ENCODE measurements at regions of chr1 and their contacts with region 1.

Region 1: GRCh38 chr1:63522891-63523728 is at the starts of genes EFCAB7 and ITGB3BP:
- DNase-seq: peak; percentile 92
- ATAC-seq: peak; percentile 86
- H3K4me3 ChIP-seq: peak within 1 kb of the TSS; percentile 76 to 97 (median 88)
- H3K4me3 Mint-ChIP-seq: peak within 1 kb of the TSS; percentile 92
- H3K27ac ChIP-seq: peak within 1 kb of the TSS; percentile 88 to 91
- H3K27ac Mint-ChIP-seq: peak within 1 kb of the TSS; percentile 96
- H3K4me1 ChIP-seq: peaks cover 16 to 17% of the 10 kb centered on the region in 2 donors
- H3K4me1 Mint-ChIP-seq: peaks cover 26% of the 10 kb centered on the region
- H3K27me3 ChIP-seq: no peaks in the 10 kb centered on the region
- H3K27me3 Mint-ChIP-seq: no peaks in the 10 kb centered on the region
- CTCF ChIP-seq: no peak
- total RNA-seq, gene EFCAB7: 11.2 and 14.7 TPM in 2 replicates
- total RNA-seq, gene ITGB3BP: 30.3 and 37.4 TPM in 2 replicates

Region 2: GRCh38 chr1:62800825-62801306 is 722.2 kb before region 1 on chr1:
- CTCF ChIA-PET with region 1: no interaction called
- POLR2A ChIA-PET with region 1: no interaction called
- intact Hi-C with region 1: loop called (anchors 5 kb)
- DNase-seq: peak; percentile 90
- ATAC-seq: peak; percentile 99
- H3K4me3 ChIP-seq: peak overlapping the region in 3 of 5 experiments; percentile 11 to 53 (median 19)
- H3K4me3 Mint-ChIP-seq: peak overlapping the region; percentile 84
- H3K27ac ChIP-seq: peak overlapping the region; percentile 70 to 83
- H3K27ac Mint-ChIP-seq: peak overlapping the region; percentile 96
- H3K4me1 ChIP-seq: peaks cover 36 to 52% of the 10 kb centered on the region in 2 donors
- H3K4me1 Mint-ChIP-seq: peaks cover 38% of the 10 kb centered on the region
- H3K27me3 ChIP-seq: no peaks in the 10 kb centered on the region
- H3K27me3 Mint-ChIP-seq: no peaks in the 10 kb centered on the region
- CTCF ChIP-seq: no peak

Region 3: GRCh38 chr1:63316984-63317816 is 205.9 kb before region 1 on chr1:
- CTCF ChIA-PET with region 1: no interaction called
- POLR2A ChIA-PET with region 1: no interaction called
- intact Hi-C with region 1: loop called (anchors 5 kb)
- DNase-seq: peak; percentile 70
- ATAC-seq: peak; percentile 74
- H3K4me3 ChIP-seq: peak overlapping the region; percentile 3 to 59 (median 42)
- H3K4me3 Mint-ChIP-seq: peak overlapping the region; percentile 66
- H3K27ac ChIP-seq: no peak overlapping the region
- H3K27ac Mint-ChIP-seq: no peak overlapping the region
- H3K4me1 ChIP-seq: peaks cover 43 to 52% of the 10 kb centered on the region in 2 donors
- H3K4me1 Mint-ChIP-seq: peaks cover 28% of the 10 kb centered on the region
- H3K27me3 ChIP-seq: peaks cover 0 to 74% (median 60%) of the 10 kb centered on the region in 4 experiments
- H3K27me3 Mint-ChIP-seq: peaks cover 66% of the 10 kb centered on the region
- CTCF ChIP-seq: peak; percentile 54

Region 4: GRCh38 chr1:63367215-63368103 is 155.7 kb before region 1 on chr1 and contains the start of gene ALG6:
- CTCF ChIA-PET with region 1: no interaction called
- POLR2A ChIA-PET with region 1: no interaction called
- intact Hi-C with region 1: loop called (anchors 1 kb)
- DNase-seq: peak; percentile 94
- ATAC-seq: peak; percentile 95
- H3K4me3 ChIP-seq: peak within 1 kb of the TSS; percentile 66 to 97 (median 83)
- H3K4me3 Mint-ChIP-seq: peak within 1 kb of the TSS; percentile 99
- H3K27ac ChIP-seq: peak within 1 kb of the TSS; percentile 70 to 82
- H3K27ac Mint-ChIP-seq: peak within 1 kb of the TSS; percentile 92
- H3K4me1 ChIP-seq: peaks cover 9 to 15% of the 10 kb centered on the region in 2 donors
- H3K4me1 Mint-ChIP-seq: peaks cover 19% of the 10 kb centered on the region
- H3K27me3 ChIP-seq: no peaks in the 10 kb centered on the region
- H3K27me3 Mint-ChIP-seq: peaks cover 6% of the 10 kb centered on the region
- CTCF ChIP-seq: no peak
- total RNA-seq, gene ALG6: 31.4 and 35.0 TPM in 2 replicates

Region 5: DNA sequence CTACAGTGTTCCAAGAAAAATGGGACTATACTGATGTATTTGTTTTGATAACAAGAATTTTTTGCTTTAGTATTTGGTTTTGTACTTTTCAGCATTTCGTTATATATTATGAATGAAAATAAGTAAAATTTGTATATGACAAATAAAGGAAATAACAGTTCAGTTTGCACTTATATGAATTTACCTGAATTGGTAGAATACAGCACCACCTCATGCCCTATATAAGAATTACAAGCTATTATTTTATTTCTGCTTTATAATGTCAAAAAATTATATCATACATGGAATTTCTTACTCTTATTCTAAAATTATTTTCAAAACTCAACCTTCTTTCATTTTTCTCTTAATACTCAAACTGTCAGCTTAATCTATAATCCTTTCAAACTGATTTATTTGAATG is 14.8 kb after region 1 on chr1:
- CTCF ChIA-PET with region 1: interaction called, 3 read pairs
- POLR2A ChIA-PET with region 1: no interaction called
- intact Hi-C with region 1: loop called (anchors 2 kb)
- DNase-seq: peak; percentile 17
- ATAC-seq: no peak
- H3K4me3 ChIP-seq: no peak overlapping the region
- H3K4me3 Mint-ChIP-seq: no peak overlapping the region
- H3K27ac ChIP-seq: no peak overlapping the region
- H3K27ac Mint-ChIP-seq: no peak overlapping the region
- H3K4me1 ChIP-seq: no peaks in the 10 kb centered on the region
- H3K4me1 Mint-ChIP-seq: no peaks in the 10 kb centered on the region
- H3K27me3 ChIP-seq: no peaks in the 10 kb centered on the region
- H3K27me3 Mint-ChIP-seq: no peaks in the 10 kb centered on the region
- CTCF ChIP-seq: peak; percentile 73

Region 6: DNA sequence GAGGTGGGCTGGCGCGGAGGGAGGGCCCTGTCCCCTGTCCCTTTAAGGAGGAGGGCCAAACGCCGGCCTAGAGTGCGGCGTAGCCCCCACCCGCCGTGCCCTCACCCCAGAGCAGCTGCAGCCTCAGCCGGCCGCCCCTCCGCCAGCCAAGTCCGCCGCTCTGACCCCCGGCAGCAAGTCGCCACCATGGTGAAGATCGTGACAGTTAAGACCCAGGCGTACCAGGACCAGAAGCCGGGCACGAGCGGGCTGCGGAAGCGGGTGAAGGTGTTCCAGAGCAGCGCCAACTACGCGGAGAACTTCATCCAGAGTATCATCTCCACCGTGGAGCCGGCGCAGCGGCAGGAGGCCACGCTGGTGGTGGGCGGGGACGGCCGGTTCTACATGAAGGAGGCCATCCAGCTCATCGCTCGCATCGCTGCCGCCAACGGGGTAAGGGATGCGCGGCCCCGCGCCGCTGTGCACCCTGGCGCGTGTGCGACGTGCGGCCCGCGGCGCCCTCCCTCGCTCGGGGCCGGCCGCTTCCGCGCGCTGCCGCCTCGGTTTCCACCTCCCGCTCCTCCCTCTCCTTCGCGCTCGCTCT is 70.3 kb after region 1 on chr1 and contains the start of gene PGM1:
- CTCF ChIA-PET with region 1: no interaction called
- POLR2A ChIA-PET with region 1: interaction called, 3 read pairs
- intact Hi-C with region 1: loop called (anchors 1 kb)
- DNase-seq: peak; percentile 81
- ATAC-seq: peak; percentile 81
- H3K4me3 ChIP-seq: peak within 1 kb of the TSS; percentile 32 to 92 (median 80)
- H3K4me3 Mint-ChIP-seq: peak within 1 kb of the TSS; percentile 98
- H3K27ac ChIP-seq: peak within 1 kb of the TSS; percentile 78 to 88
- H3K27ac Mint-ChIP-seq: peak within 1 kb of the TSS; percentile 98
- H3K4me1 ChIP-seq: peaks cover 6 to 9% of the 10 kb centered on the region in 2 donors
- H3K4me1 Mint-ChIP-seq: peaks cover 13% of the 10 kb centered on the region
- H3K27me3 ChIP-seq: no peaks in the 10 kb centered on the region
- H3K27me3 Mint-ChIP-seq: no peaks in the 10 kb centered on the region
- CTCF ChIP-seq: no peak
- total RNA-seq, gene PGM1: 13.2 and 17.3 TPM in 2 replicates

Region 7: GRCh38 chr1:65419681-65420589 is 1896.8 kb after region 1 on chr1:
- CTCF ChIA-PET with region 1: no interaction called
- POLR2A ChIA-PET with region 1: no interaction called
- intact Hi-C with region 1: loop called (anchors 2 kb)
- DNase-seq: peak; percentile 99
- ATAC-seq: peak; percentile 91
- H3K4me3 ChIP-seq: peak overlapping the region; percentile 66 to 97 (median 92)
- H3K4me3 Mint-ChIP-seq: no peak overlapping the region
- H3K27ac ChIP-seq: peak overlapping the region; percentile 66 to 75
- H3K27ac Mint-ChIP-seq: no peak overlapping the region
- H3K4me1 ChIP-seq: peaks cover 14 to 23% of the 10 kb centered on the region in 2 donors
- H3K4me1 Mint-ChIP-seq: peaks cover 16% of the 10 kb centered on the region
- H3K27me3 ChIP-seq: peaks cover 0 to 8% (median 5%) of the 10 kb centered on the region in 4 experiments
- H3K27me3 Mint-ChIP-seq: peaks cover 15% of the 10 kb centered on the region
- CTCF ChIP-seq: no peak

Measured in B cell (primary cell).